Left lung (tissue), 14 donors: ENCODE measurements at regions of chr6 and their contacts with region 1.

Region 1: DNA sequence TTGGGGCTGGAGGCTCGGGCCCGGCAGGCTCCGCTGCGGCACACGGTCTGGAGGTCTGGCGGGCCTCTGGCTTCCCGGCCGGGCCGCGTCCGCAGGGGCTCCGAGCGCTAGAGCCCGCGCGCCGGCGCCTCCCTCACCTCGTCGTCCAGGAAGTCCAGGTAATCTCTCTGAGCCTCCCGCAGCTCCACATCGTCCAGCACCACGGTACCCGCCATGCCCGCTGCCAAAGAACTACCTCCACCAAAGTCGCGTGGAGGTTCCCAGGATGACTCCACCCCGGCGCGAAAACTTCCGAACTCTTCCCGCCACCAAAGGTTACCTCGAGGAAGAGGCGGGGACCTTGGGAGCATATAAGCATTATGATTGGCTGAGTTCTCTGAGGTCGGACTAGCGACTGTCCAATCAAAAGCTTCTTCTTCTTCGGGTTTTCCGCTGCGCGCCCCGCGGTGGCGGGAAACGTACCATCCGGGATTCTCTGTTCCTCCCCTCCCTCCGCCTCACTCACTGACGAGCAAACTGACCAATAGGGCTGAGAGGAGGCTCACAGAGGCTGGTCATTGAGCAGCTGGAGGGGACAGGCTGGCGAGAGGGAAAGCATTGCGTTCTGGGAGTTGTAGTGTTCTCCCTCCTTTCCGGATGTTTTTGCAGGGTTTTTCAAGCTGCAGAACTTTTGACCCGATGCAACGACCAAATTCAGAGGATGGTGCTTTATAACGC is at the start of gene MCM3:
- DNase-seq: peak; percentile 94 to 99 (median 98)
- ATAC-seq: peak; percentile 99
- H3K4me3 ChIP-seq: peak within 1 kb of the TSS; percentile 63 to 85
- H3K27ac ChIP-seq: peak within 1 kb of the TSS; percentile 66 to 68
- H3K4me1 ChIP-seq: peaks cover 6 to 31% of the 10 kb centered on the region in 2 donors
- H3K27me3 ChIP-seq: no peaks in the 10 kb centered on the region
- CTCF ChIP-seq: peak in 1 of 2 donors; percentile 4
- polyA plus RNA-seq, gene MCM3: 94.0 to 122 (median 97.7) TPM

Region 2: DNA sequence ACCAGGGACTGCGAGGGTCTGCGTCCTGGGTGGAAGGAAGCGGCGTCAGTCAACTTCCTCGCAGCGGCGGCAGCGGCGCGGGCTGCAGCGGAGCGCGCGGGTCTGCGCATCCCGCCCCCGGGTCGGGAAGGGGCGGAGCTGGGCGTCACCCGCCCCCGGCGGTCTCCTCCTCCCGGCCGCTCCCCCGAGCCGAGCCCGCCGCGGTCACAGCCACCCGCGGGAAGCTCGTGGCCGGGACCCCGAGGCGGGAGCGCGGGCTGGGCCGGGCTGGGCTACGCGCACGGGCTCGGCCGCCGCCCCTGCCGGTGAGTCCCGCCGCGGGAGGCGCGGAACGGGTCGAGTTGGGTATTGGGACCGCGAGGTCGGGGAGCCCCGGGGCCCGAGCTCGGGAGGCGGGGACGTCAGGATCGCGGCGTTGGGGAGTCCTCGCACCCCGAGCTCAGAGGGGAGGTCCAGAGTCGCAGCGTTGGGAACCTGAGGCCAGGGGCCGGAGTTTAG is 77.4 kb after region 1 on chr6 and contains the start of gene PAQR8:
- intact Hi-C with region 1: no loop called
- DNase-seq: peak; percentile 79 to 96 (median 86)
- ATAC-seq: peak; percentile 95
- H3K4me3 ChIP-seq: peak within 1 kb of the TSS; percentile 60 to 81
- H3K27ac ChIP-seq: peak within 1 kb of the TSS; percentile 69 to 86
- H3K4me1 ChIP-seq: peaks cover 7 to 25% of the 10 kb centered on the region in 2 donors
- H3K27me3 ChIP-seq: no peaks in the 10 kb centered on the region
- CTCF ChIP-seq: no peak
- polyA plus RNA-seq, gene PAQR8: 15.5 to 22.9 (median 17.4) TPM

Region 3: DNA sequence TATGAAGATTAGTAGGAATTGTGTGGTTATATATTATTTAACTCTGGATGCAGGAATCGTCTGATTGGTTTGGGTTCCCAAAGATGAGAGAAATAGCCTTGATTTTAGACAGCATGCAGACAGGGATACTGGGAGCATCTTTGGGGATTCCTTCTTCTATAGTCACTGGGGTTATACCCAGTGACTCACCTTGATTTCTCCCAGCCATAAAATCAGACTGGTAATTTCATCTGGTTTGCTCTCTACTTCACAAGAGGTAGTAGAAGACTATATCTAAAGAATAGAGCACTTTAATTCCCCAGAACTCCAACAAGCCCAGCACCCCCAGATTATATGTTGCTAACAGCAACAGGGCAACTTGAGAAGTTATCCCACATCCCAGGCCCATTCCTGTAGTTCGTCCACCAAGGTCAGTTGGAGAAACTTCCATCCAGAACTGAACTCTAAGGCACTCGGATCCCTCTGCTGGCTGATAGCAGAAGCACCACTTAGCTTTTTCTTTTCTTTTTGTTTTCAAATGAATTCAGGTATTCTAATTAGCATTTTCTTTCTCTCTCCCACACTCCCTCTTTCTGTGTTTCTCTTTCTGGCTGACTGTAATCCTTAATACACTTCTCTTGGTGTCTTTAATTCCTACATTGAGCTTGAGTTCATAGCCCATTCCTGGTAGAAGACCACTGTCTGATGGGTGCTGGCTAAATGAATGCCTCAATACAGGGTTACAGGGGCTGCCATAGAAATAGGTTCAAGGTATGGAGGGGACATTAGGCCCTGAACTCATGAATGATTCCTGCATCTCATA is 115.1 kb after region 1 on chr6:
- intact Hi-C with region 1: loop called in 1 of 2 experiments (anchors 5 kb)
- DNase-seq: peak in 1 of 4 donors; percentile 61
- ATAC-seq: peak; percentile 90
- H3K4me3 ChIP-seq: no peak overlapping the region
- H3K27ac ChIP-seq: no peak overlapping the region
- H3K4me1 ChIP-seq: peaks cover 0 to 9% of the 10 kb centered on the region in 2 donors
- H3K27me3 ChIP-seq: no peaks in the 10 kb centered on the region
- CTCF ChIP-seq: peak; percentile 58 to 85